GM12878 (cell line): ENCODE measurements at regions of chr7 and their contacts with region 1.

Region 1: DNA sequence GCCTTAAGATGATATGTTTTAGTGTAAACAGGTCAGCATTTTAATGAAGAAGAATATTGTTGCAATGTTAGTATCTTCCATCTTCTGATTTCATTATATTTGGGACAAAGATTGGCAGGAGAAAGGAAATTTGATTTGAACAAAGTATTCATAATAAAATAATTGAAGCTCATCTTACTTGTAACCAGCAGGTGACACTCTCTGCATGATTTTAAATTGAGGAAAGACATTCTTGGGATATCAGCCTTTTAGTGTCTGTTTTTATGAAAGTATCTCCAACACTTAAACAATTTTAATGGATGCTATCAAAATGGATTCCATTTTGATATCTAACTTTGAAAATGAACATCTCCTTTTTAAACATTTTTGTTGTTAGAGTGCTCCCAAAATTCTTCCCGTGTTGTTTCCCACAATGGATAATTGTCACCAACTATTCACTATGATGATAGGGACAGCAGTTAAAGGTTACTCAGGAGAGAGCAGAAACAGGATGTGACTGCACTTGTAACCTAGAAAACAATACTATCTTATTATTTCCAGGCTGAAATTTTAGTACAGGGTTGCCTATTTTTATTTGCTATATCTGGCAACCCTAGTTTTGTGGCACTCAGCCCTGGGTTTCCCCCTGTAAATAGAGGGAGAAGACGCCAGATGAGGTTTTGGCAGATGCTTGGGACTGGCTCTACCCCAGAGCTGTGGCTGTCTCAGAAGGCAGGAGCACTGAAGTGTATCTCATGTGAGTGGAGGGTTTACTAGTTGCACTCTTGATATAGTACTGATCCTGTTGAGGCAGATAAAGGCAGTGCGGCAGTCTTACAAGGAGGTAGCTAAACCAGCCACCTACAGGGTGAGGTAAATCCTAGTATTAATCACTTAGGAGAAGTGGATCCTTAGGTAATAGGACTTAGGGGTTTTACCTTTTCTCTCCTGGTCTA is 31.0 kb upstream of the ABCB4 start:
- DNase-seq: no peak
- ATAC-seq: peak; percentile 57
- H3K4me3 ChIP-seq: no peak overlapping the region
- H3K27ac ChIP-seq: no peak overlapping the region
- H3K4me1 ChIP-seq: no peaks in the 10 kb centered on the region
- H3K27me3 ChIP-seq: no peaks in the 10 kb centered on the region
- CTCF ChIP-seq: peak; percentile 12 to 55 (median 31); a peak in 4 of 6 replicates
- EP300 ChIP-seq: no peak
- POLR2A ChIP-seq: no peak
- RAD21 ChIP-seq: peak; percentile 69

Region 2: GRCh38 chr7:87474533-87475358 is 31.8 kb before region 1 on chr7:
- CTCF ChIA-PET with region 1: no interaction called
- POLR2A ChIA-PET with region 1: no interaction called
- RAD21 ChIA-PET with region 1: interaction called, 6 read pairs
- SMC1A ChIA-PET with region 1: interaction called, 10 read pairs
- in situ Hi-C with region 1: no loop called
- intact Hi-C with region 1: no loop called
- DNase-seq: peak; percentile 96
- ATAC-seq: peak; percentile 80
- H3K4me3 ChIP-seq: peak overlapping the region; percentile 77
- H3K27ac ChIP-seq: peak overlapping the region; percentile 72
- H3K4me1 ChIP-seq: peaks cover 12% of the 10 kb centered on the region
- H3K27me3 ChIP-seq: no peaks in the 10 kb centered on the region
- CTCF ChIP-seq: no peak
- EP300 ChIP-seq: peak; percentile 87 to 88
- POLR2A ChIP-seq: 0 out of 2 replicates have a peak, but pooled peaks have one; percentile 18
- RAD21 ChIP-seq: 0 out of 2 replicates have a peak, but pooled peaks have one; percentile 1

Region 3: GRCh38 chr7:87517136-87517815 is 10.8 kb after region 1 on chr7:
- CTCF ChIA-PET with region 1: interaction called, 13 read pairs
- POLR2A ChIA-PET with region 1: interaction called, 3 read pairs
- RAD21 ChIA-PET with region 1: no interaction called
- SMC1A ChIA-PET with region 1: interaction called, 8 read pairs
- in situ Hi-C with region 1: no loop called
- intact Hi-C with region 1: no loop called
- DNase-seq: no peak
- ATAC-seq: no peak
- H3K4me3 ChIP-seq: no peak overlapping the region
- H3K27ac ChIP-seq: no peak overlapping the region
- H3K4me1 ChIP-seq: no peaks in the 10 kb centered on the region
- H3K27me3 ChIP-seq: no peaks in the 10 kb centered on the region
- CTCF ChIP-seq: no peak
- EP300 ChIP-seq: no peak
- POLR2A ChIP-seq: no peak
- RAD21 ChIP-seq: no peak

Region 4: DNA sequence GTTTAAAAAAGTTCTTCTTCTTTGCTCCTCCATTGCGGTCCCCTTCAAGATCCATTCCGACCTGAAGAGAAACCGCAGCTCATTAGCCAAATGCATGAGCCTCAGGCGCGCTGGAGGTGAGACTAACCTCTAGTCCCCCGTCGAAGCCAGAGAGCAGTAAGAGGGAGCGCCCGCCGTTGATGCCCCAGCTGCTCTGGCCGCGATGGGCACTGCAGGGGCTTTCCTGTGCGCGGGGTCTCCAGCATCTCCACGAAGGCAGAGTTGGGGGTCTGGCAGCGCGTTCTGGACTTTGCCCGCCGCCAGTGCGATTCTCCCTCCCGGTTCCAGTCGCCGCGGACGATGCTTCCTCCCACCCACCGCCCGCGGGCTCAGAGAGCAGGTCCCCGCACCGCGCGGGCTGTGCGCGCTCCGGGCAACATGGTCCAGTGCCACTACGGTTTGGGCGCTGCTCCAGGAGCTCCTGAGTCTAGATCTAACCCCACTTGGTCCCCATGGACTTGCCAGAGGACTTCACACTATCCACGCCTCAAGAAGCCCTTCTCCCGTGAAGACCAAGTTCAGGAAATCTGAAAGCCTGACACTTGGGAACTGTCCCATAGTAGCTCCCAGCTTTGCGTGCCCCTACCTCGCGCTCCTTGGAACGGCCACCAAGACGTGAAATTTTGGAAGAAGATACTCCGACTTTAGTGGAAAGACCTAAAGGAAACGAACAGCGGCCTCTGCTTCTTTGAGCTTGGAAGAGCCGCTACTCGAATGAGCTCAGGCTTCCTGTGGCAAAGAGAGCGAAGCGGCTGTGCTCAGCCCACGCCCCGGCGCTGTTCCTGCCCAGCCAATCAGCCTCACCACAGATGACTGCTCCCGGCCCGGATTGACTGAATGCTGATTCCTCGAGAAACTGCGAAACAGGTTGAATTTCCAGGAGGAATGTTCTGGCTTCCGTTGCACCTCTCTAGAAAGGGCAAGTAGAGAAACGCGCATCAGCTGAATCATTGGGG is 93.9 kb after region 1 on chr7 and contains the start of gene ABCB1:
- CTCF ChIA-PET with region 1: interaction called, 18 read pairs
- POLR2A ChIA-PET with region 1: no interaction called
- RAD21 ChIA-PET with region 1: interaction called, 33 read pairs
- SMC1A ChIA-PET with region 1: interaction called, 23 read pairs
- in situ Hi-C with region 1: no loop called
- intact Hi-C with region 1: no loop called
- DNase-seq: no peak
- ATAC-seq: peak; percentile 77
- H3K4me3 ChIP-seq: peak within 1 kb of the TSS; percentile 50; the same call in 1 of the 2 replicates
- H3K27ac ChIP-seq: no peak within 1 kb of the TSS
- H3K4me1 ChIP-seq: peaks cover 22% of the 10 kb centered on the region
- H3K27me3 ChIP-seq: peaks cover 0 to 7% of the 10 kb centered on the region in 2 experiments; a peak in 1 of 4 replicates
- CTCF ChIP-seq: no peak; a peak in 1 of 6 replicates
- EP300 ChIP-seq: 0 out of 4 replicates have a peak, but pooled peaks of 1 of the 2 experiments have one; percentile 12
- POLR2A ChIP-seq: no peak
- RAD21 ChIP-seq: no peak
- polyA plus RNA-seq, gene ABCB1: 0.40 to 1.1 TPM

Region 5: GRCh38 chr7:87628780-87629569 is 122.5 kb after region 1 on chr7:
- CTCF ChIA-PET with region 1: interaction called, 17 read pairs
- POLR2A ChIA-PET with region 1: no interaction called
- RAD21 ChIA-PET with region 1: interaction called, 6 read pairs
- SMC1A ChIA-PET with region 1: interaction called, 17 read pairs
- in situ Hi-C with region 1: no loop called
- intact Hi-C with region 1: loop called (anchors 5 kb)
- DNase-seq: no peak
- ATAC-seq: peak; percentile 43
- H3K4me3 ChIP-seq: peak overlapping the region; percentile 69
- H3K27ac ChIP-seq: no peak overlapping the region
- H3K4me1 ChIP-seq: peaks cover 10% of the 10 kb centered on the region; the same call in 1 of the 2 replicates
- H3K27me3 ChIP-seq: no peaks in the 10 kb centered on the region
- CTCF ChIP-seq: no peak
- EP300 ChIP-seq: no peak
- POLR2A ChIP-seq: no peak
- RAD21 ChIP-seq: no peak

Region 6: GRCh38 chr7:87797798-87798403 is 291.4 kb after region 1 on chr7:
- CTCF ChIA-PET with region 1: interaction called, 10 read pairs
- POLR2A ChIA-PET with region 1: no interaction called
- RAD21 ChIA-PET with region 1: interaction called, 7 read pairs
- SMC1A ChIA-PET with region 1: interaction called, 5 read pairs
- in situ Hi-C with region 1: no loop called
- intact Hi-C with region 1: loop called (anchors 5 kb)
- DNase-seq: peak; percentile 45
- ATAC-seq: peak; percentile 96
- H3K4me3 ChIP-seq: no peak overlapping the region
- H3K27ac ChIP-seq: no peak overlapping the region
- H3K4me1 ChIP-seq: no peaks in the 10 kb centered on the region
- H3K27me3 ChIP-seq: no peaks in the 10 kb centered on the region
- CTCF ChIP-seq: peak; percentile 56 to 81 (median 59); a peak in 4 of 6 replicates
- EP300 ChIP-seq: no peak
- POLR2A ChIP-seq: no peak
- RAD21 ChIP-seq: peak; percentile 89

Region 7: GRCh38 chr7:87876040-87876868 is 369.7 kb after region 1 on chr7 and contains the starts of genes DBF4 and SLC25A40:
- CTCF ChIA-PET with region 1: interaction called, 3 read pairs
- POLR2A ChIA-PET with region 1: no interaction called
- RAD21 ChIA-PET with region 1: interaction called, 5 read pairs
- SMC1A ChIA-PET with region 1: interaction called, 3 read pairs
- in situ Hi-C with region 1: no loop called
- intact Hi-C with region 1: loop called (anchors 5 kb)
- DNase-seq: peak; percentile 86
- ATAC-seq: peak; percentile 86
- H3K4me3 ChIP-seq: peak within 1 kb of the TSS; percentile 88
- H3K27ac ChIP-seq: peak within 1 kb of the TSS; percentile 92
- H3K4me1 ChIP-seq: no peaks in the 10 kb centered on the region
- H3K27me3 ChIP-seq: no peaks in the 10 kb centered on the region
- CTCF ChIP-seq: no peak
- EP300 ChIP-seq: peak in 1 of 2 experiments; percentile 34; a peak in 1 of 4 replicates
- POLR2A ChIP-seq: peak; percentile 91
- RAD21 ChIP-seq: no peak
- polyA plus RNA-seq, gene DBF4: 46.1 to 47.0 TPM
- polyA plus RNA-seq, gene SLC25A40: 15.8 to 17.4 TPM